ENCODE measurements at regions of chr18 and their contacts with region 1.

Region 1: GRCh38 chr18:63848159-63848558 is 39.3 kb upstream of the SERPINB2 start:
- DNase-seq: peak; percentile 75
- ATAC-seq: peak; percentile 79
- H3K4me3 ChIP-seq: no peak overlapping the region
- H3K27ac ChIP-seq: no peak overlapping the region
- H3K4me1 ChIP-seq: no peaks in the 10 kb centered on the region
- H3K27me3 ChIP-seq: no peaks in the 10 kb centered on the region; the same call in 1 of the 2 replicates
- CTCF ChIP-seq: peak; percentile 77
- POLR2A ChIP-seq: no peak
- RAD21 ChIP-seq: peak; percentile 83

Region 2: DNA sequence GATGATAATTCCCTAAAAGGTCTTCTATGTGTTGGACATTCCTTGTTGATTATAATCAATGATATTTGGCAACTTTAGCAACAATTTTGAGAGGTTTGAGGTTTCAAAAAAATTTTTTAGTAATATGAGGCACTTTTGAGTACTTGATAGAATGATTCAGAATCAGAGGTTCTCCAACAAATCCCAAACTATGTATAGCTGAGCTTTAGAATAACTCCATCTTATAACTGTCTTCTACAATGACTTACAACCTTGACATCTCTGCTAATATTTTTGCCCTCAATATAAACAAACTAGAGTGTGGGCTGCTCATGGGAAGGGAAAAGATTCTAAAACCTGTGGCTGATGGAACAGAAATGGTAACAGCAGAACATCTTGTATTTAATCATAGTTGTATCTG is 94.5 kb before region 1 on chr18:
- CTCF ChIA-PET with region 1: interaction called, 3 read pairs
- POLR2A ChIA-PET with region 1: no interaction called
- dilution Hi-C with region 1: no loop called
- in situ Hi-C with region 1: no loop called
- intact Hi-C with region 1: loop called (anchors 5 kb)
- DNase-seq: peak; percentile 18
- ATAC-seq: no peak
- H3K4me3 ChIP-seq: no peak overlapping the region
- H3K27ac ChIP-seq: no peak overlapping the region
- H3K4me1 ChIP-seq: no peaks in the 10 kb centered on the region
- H3K27me3 ChIP-seq: peaks cover 2% of the 10 kb centered on the region; the same call in 1 of the 2 replicates
- CTCF ChIP-seq: no peak
- POLR2A ChIP-seq: no peak
- RAD21 ChIP-seq: no peak

Region 3: DNA sequence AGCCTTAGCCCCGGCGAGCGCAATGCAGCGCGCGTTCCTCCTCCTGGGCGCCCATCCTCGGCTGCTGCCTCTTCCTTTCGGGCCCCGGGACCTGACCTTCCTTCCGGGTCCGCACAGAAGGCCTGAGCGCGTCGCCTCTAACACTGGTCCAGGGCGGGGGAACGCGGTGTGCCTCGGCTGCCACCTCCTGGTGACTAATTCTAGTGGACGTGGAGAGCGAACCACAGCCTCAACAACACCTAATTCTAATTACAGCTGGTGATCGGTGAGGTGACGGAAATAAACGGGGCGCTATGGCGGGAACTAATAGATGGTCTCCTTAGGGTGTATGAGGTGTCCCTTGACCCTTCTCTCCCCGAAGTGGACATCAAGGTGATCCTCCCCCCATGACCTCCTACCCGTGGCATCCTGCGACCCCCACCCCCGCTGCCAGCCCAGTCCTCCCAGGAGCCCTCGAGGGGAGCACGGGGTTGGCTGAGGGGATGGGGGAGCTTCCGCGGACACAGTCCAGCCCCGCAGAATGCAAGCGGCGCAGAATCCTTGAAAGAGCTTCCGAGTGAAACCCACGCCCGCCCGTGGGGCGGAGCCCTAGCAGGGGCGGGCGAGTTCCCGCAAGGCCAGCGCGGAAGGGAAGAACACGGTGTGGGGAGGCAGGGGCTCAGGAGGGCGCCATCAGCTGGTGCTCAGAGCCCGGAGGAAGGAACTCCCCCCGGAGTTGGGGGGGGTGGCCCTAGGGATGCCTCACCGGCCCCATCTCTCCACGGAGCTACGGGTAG is 88.2 kb after region 1 on chr18:
- CTCF ChIA-PET with region 1: interaction called, 5 read pairs
- POLR2A ChIA-PET with region 1: no interaction called
- dilution Hi-C with region 1: no loop called
- in situ Hi-C with region 1: no loop called
- intact Hi-C with region 1: loop called (anchors 2 kb)
- DNase-seq: peak; percentile 45
- ATAC-seq: peak; percentile 98
- H3K4me3 ChIP-seq: peak overlapping the region; percentile 54
- H3K27ac ChIP-seq: no peak overlapping the region
- H3K4me1 ChIP-seq: no peaks in the 10 kb centered on the region
- H3K27me3 ChIP-seq: peaks cover 18% of the 10 kb centered on the region
- CTCF ChIP-seq: peak; percentile 67
- POLR2A ChIP-seq: no peak
- RAD21 ChIP-seq: peak; percentile 68

Measured in IMR-90 (cell line).